Calu3 (cell line): ENCODE measurements at regions of chr1 and their contacts with region 1.

Region 1: DNA sequence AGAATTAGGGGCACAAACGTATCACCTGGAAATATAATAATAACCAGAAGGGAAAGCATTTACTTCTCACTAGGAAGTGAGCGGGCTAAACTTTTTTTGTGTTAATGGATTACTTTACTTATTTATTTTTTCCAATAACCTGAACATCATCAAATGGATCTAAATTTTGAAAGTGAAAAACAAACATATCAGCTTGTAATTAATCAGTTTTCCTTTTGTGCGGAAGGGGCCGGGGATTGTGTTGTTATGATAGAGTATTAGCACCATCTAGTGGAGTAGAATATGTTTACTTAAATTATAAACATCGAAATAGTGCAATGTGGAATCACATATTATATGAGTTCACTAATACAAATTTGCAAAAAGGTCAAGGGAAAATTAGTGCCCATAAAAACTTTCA is 9.0 kb downstream of the CFH start:
- DNase-seq: no peak
- H3K4me3 Mint-ChIP-seq: no peak overlapping the region
- H3K27ac Mint-ChIP-seq: no peak overlapping the region
- H3K4me1 Mint-ChIP-seq: no peaks in the 10 kb centered on the region
- H3K27me3 Mint-ChIP-seq: no peaks in the 10 kb centered on the region
- CTCF ChIP-seq: peak; percentile 31

Region 2: GRCh38 chr1:196317535-196318522 is 343.0 kb before region 1 on chr1:
- CTCF ChIA-PET with region 1: no interaction called
- intact Hi-C with region 1: loop called (anchors 1 kb)
- DNase-seq: peak; percentile 29
- H3K4me3 Mint-ChIP-seq: no peak overlapping the region
- H3K27ac Mint-ChIP-seq: no peak overlapping the region
- H3K4me1 Mint-ChIP-seq: no peaks in the 10 kb centered on the region
- H3K27me3 Mint-ChIP-seq: no peaks in the 10 kb centered on the region
- CTCF ChIP-seq: peak; percentile 47

Region 3: GRCh38 chr1:196355206-196355786 is 305.6 kb before region 1 on chr1:
- CTCF ChIA-PET with region 1: interaction called, 27 read pairs
- intact Hi-C with region 1: loop called (anchors 1 kb)
- DNase-seq: peak; percentile 16
- H3K4me3 Mint-ChIP-seq: no peak overlapping the region
- H3K27ac Mint-ChIP-seq: no peak overlapping the region
- H3K4me1 Mint-ChIP-seq: no peaks in the 10 kb centered on the region
- H3K27me3 Mint-ChIP-seq: no peaks in the 10 kb centered on the region
- CTCF ChIP-seq: peak; percentile 42

Region 4: GRCh38 chr1:196538473-196538872 is 122.4 kb before region 1 on chr1:
- CTCF ChIA-PET with region 1: no interaction called
- intact Hi-C with region 1: no loop called
- DNase-seq: no peak
- H3K4me3 Mint-ChIP-seq: no peak overlapping the region
- H3K27ac Mint-ChIP-seq: no peak overlapping the region
- H3K4me1 Mint-ChIP-seq: no peaks in the 10 kb centered on the region
- H3K27me3 Mint-ChIP-seq: no peaks in the 10 kb centered on the region
- CTCF ChIP-seq: no peak